Kidney (tissue), 22 donors: ENCODE measurements at regions of chr13 and their contacts with region 1.

Region 1: DNA sequence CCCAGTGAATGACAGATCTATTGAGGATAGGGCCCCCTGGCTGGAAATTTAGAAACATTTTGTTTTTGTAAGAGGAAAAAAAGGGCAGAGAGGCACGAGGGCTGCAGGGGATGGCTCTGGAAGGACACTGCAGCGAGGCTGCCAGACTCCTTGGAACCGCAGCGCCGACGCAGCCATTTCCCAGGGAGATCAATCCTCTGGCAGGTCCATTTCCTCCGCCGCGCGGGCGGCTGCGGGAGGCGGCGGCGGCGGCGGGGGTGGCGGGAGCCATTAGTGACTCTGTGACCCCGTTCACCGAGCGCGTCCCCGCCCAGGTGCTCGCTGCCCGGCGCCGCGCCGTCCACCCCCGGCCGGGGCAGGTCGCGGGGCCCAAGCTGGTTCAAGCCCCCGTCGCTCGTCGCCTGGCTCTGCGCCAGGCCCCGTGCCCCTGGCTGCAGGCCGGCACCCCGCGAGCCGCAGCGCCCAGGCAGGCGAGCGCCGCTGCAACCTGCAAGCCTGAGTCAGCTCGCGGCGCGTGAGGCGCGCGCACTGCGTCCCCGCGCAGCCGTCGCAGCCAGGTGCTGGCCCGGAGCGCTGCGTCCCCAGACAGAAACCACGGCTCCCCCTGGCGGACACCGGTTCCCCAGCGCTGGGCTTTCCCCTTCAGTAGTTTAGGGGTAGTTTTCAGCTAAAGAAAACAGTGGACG is 192.6 kb downstream of the KATNAL1 start:
- DNase-seq: peak; percentile 92 to 94 (median 93)
- H3K4me3 ChIP-seq: peak overlapping the region; percentile 63 to 80 (median 65)
- H3K27ac ChIP-seq: peak overlapping the region; percentile 7 to 66
- H3K4me1 ChIP-seq: peaks cover 0 to 7% (median 4%) of the 10 kb centered on the region in 3 donors
- H3K27me3 ChIP-seq: no peaks in the 10 kb centered on the region
- CTCF ChIP-seq: peak; percentile 81

Region 2: DNA sequence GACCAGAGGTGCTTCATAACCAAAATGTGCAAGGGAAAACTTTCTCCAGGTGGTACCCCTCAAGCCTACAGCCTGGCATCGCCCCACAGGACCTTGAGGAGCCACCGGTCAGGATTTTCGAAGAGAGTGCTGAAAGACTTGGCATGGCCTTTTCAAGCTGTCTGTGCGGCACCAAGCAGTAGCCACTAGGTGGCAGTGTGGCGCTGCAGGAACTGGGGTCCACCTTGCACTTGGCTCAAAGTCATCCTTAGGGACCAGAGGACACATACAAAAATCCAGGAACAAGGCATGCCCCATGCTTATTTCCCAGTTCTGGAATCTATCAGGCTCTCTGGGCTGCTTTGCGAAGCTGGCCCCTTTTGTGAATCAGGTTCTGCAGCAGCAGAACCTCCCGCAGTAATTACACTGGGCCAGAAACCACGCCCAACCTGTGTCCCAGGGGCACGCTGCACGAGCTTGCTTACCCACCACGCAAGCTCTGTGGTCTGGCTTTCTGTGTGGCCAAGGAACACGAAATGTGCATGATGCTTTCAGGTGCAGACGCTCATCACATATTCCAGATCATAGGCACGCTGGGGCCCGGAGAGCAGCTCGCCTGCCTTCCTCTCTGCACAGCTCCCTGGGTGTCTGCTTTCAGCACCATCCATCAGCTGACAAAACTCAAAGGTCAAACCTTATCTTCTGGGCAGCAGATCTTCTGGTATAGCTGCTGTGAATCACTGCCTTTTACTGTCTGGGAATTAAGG is 606.4 kb before region 1 on chr13:
- intact Hi-C with region 1: loop called (anchors 5 kb)
- DNase-seq: peak; percentile 89 to 93 (median 93)
- H3K4me3 ChIP-seq: no peak overlapping the region
- H3K27ac ChIP-seq: no peak overlapping the region
- H3K4me1 ChIP-seq: peaks cover 3 to 8% (median 5%) of the 10 kb centered on the region in 3 donors
- H3K27me3 ChIP-seq: no peaks in the 10 kb centered on the region
- CTCF ChIP-seq: peak; percentile 97

Region 3: DNA sequence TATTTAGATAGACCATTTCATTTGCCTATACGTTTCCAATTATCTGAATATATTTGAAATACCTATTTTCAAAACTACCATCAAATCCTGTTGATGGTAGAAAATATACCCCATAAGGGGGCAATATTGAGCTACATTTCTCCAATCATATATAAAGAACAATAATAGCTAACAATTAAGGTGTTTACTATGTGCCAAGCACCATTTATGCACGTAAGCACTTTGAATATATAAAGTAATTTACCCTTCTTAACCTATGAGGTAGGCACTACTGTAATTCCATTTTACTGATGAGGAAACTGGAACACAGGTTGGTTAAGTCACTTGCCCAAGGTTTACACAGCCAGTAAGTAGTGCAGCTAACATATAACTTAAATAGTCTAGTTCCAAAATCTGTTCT is 343.5 kb before region 1 on chr13:
- intact Hi-C with region 1: loop called (anchors 10 kb)
- DNase-seq: peak in 2 of 5 donors; percentile 26 to 28
- H3K4me3 ChIP-seq: no peak overlapping the region
- H3K27ac ChIP-seq: no peak overlapping the region
- H3K4me1 ChIP-seq: no peaks in the 10 kb centered on the region
- H3K27me3 ChIP-seq: no peaks in the 10 kb centered on the region
- CTCF ChIP-seq: peak; percentile 34